Naive thymus-derived CD4-positive, alpha-beta T cell (primary cell): ENCODE measurements at regions of chr2 and their contacts with region 1.

Region 1: DNA sequence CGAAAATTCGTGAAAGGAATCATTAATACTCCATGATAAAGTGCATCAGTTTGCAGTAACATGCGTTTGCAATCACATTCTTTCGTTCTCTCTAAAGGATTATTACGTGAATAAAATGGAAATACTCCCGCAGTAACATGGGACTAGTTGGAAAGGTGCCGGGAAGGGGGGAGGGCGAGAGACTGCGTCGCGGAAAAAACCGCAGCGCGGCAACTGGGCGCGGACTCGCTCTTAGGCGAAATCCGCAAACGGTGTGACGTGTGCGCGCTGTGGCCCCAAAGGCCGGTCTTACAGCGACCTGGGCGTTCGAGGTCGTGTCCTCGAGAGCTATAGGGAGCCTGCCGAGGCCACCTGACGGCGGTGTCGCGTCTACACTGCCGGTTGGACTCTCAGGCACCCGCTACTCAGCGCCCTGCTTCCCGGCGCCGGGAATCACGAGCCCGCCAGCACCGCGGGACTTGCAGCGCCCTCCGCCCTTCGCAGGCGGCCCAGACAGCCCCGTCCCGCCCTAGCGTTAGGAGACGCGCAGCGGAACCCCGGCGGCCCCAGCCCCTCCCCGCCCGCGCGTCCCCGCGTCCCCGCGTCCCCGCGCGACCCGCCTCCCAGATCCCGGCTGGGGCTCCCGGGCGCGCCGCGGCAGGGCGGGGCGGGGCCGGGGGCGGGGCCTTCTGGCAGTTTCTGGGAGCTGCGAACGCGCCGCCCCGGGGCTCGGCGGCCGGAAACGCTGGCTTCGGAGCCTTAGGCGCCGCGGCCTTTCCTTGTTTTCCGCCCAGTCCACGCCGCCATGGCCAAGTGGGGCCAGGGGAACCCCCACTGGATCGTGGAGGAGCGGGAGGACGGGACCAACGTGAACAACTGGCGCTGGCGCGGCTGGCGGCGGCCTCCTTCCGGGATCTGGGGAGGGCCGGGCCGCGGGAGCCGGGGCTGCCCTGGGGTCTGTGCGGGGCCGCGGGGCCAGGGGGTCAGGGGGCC is 15.1 kb downstream of the C2orf74 start:
- DNase-seq: peak; percentile 89 to 97 (median 93)
- ATAC-seq: peak; percentile 95
- H3K4me3 ChIP-seq: peak overlapping the region; percentile 82
- H3K4me3 Mint-ChIP-seq: peak overlapping the region; percentile 90 to 100 (median 94)
- H3K27ac ChIP-seq: peak overlapping the region; percentile 97
- H3K27ac Mint-ChIP-seq: peak overlapping the region; percentile 89 to 97 (median 95)
- H3K4me1 ChIP-seq: peaks cover 27 to 41% of the 10 kb centered on the region in 2 donors
- H3K4me1 Mint-ChIP-seq: peaks cover 38 to 53% (median 48%) of the 10 kb centered on the region in 7 donors
- H3K27me3 ChIP-seq: no peaks in the 10 kb centered on the region
- H3K27me3 Mint-ChIP-seq: peaks cover 0 to 8% (median 0%) of the 10 kb centered on the region in 5 donors

Region 2: GRCh38 chr2:60992985-60993392 is 184.1 kb before region 1 on chr2:
- CTCF ChIA-PET with region 1: no interaction called
- POLR2A ChIA-PET with region 1: no interaction called
- intact Hi-C with region 1: no loop called
- DNase-seq: peak in 3 of 9 donors; percentile 2 to 19 (median 14)
- ATAC-seq: peak; percentile 97
- H3K4me3 ChIP-seq: peak overlapping the region; percentile 16
- H3K4me3 Mint-ChIP-seq: peak overlapping the region in 8 of 10 donors; percentile 11 to 59 (median 25)
- H3K27ac ChIP-seq: no peak overlapping the region
- H3K27ac Mint-ChIP-seq: peak overlapping the region in 6 of 9 donors; percentile 38 to 76 (median 66)
- H3K4me1 ChIP-seq: no peaks in the 10 kb centered on the region
- H3K4me1 Mint-ChIP-seq: peaks cover 5 to 9% (median 6%) of the 10 kb centered on the region in 7 donors
- H3K27me3 ChIP-seq: no peaks in the 10 kb centered on the region
- H3K27me3 Mint-ChIP-seq: no peaks in the 10 kb centered on the region

Region 3: GRCh38 chr2:61016808-61017555 is 160.1 kb before region 1 on chr2:
- CTCF ChIA-PET with region 1: no interaction called
- POLR2A ChIA-PET with region 1: interaction called, 4 read pairs
- intact Hi-C with region 1: loop called (anchors 1 kb)
- DNase-seq: peak; percentile 41 to 75 (median 72)
- ATAC-seq: peak; percentile 79
- H3K4me3 ChIP-seq: peak overlapping the region; percentile 100
- H3K4me3 Mint-ChIP-seq: peak overlapping the region; percentile 93 to 100 (median 97)
- H3K27ac ChIP-seq: peak overlapping the region; percentile 75
- H3K27ac Mint-ChIP-seq: peak overlapping the region; percentile 90 to 99 (median 95)
- H3K4me1 ChIP-seq: peaks cover 14 to 20% of the 10 kb centered on the region in 2 donors
- H3K4me1 Mint-ChIP-seq: peaks cover 23 to 68% (median 48%) of the 10 kb centered on the region in 7 donors
- H3K27me3 ChIP-seq: no peaks in the 10 kb centered on the region
- H3K27me3 Mint-ChIP-seq: no peaks in the 10 kb centered on the region

Region 4: DNA sequence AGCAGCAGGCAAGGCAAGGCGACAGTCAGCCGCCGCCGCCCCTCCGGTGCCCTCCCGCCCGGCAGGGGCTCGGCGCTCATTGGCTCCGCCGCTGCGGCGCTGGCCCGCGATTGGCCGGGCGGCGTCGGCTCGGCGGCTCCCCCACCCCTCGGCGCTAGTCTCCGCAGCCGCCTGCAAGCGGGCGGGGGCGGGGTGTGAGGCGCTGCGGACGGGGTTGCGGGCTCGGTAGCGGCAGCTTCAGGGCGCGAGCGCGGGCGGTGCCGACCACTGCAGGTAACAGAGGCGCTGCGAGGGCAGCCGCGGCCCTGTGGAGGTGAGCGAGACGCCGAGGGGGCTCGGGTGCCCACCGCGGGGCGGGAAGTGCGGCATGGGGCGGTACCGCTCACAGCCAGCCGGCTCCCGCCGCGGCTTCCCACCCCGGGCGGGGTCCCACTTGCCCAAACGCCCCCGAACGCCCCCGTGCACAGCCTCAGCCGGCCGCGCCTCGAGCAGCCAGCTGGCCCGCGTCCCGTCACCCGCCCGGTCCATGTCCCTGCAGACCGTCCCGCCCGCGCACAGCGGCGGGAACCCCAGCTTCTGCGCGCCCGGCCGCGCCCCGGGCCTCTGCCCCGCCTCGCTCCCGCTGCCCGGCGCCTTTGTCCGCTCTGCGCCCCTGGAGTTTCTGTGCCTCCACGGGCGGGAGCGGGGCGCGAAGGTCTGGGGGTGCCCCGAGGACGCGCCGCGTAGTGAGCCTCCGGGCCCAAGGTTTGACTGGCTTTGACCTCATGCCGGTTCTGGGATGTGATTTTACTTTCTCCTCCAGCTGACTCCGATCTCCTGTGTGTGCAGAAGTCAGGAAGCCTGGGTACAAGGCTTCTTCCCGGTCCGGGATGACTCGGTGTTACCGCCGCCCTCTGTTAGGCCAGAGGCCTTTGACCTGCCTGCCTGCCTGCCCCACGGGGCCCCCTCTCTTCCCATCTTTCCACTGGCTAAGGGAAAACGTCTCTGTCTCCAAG is 111.0 kb before region 1 on chr2 and contains the start of gene SANBR:
- CTCF ChIA-PET with region 1: no interaction called
- POLR2A ChIA-PET with region 1: interaction called, 9 read pairs
- intact Hi-C with region 1: loop called (anchors 1 to 2 kb)
- DNase-seq: peak; percentile 78 to 90 (median 83)
- ATAC-seq: peak; percentile 99
- H3K4me3 ChIP-seq: peak within 1 kb of the TSS; percentile 59
- H3K4me3 Mint-ChIP-seq: peak within 1 kb of the TSS; percentile 79 to 98 (median 95)
- H3K27ac ChIP-seq: peak within 1 kb of the TSS; percentile 49
- H3K27ac Mint-ChIP-seq: peak within 1 kb of the TSS; percentile 12 to 94 (median 79)
- H3K4me1 ChIP-seq: peaks cover 0 to 6% of the 10 kb centered on the region in 2 donors
- H3K4me1 Mint-ChIP-seq: peaks cover 0 to 17% (median 5%) of the 10 kb centered on the region in 7 donors
- H3K27me3 ChIP-seq: no peaks in the 10 kb centered on the region
- H3K27me3 Mint-ChIP-seq: peaks cover 0 to 2% (median 0%) of the 10 kb centered on the region in 5 donors
- total RNA-seq, gene SANBR: 2.0 to 5.9 (median 3.6) TPM

Region 5: DNA sequence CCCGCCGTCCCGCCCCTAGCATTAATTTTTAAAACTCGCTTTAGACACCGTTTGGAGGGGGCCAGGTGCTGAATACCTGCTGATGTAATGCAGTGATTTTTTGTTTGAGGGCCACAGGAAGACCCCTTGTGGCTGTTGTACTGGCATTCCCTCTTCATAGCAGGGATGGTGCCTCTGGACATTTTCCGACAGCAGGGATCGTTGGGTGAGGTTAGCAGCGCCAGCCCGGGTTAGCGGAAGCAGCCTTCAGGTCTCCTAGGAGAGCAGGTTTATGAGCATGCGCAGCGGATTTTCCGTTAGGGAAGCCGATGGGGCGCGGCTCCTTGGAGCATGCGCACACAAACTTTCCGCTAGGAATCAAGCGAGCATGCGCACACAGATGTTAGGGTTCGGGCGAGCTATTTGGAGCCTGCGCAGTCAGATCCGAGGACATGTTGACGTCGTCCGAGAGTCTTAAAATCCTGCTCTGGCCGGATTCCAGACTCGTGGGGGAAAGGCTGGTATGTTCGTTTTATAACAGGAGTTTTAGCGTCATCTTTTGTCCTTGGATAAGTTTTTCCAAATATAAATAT is 32.3 kb before region 1 on chr2:
- CTCF ChIA-PET with region 1: interaction called, 3 read pairs
- POLR2A ChIA-PET with region 1: interaction called, 55 read pairs
- intact Hi-C with region 1: loop called (anchors 1 kb)
- DNase-seq: peak; percentile 74 to 90 (median 86)
- ATAC-seq: peak; percentile 92
- H3K4me3 ChIP-seq: peak overlapping the region; percentile 82
- H3K4me3 Mint-ChIP-seq: peak overlapping the region; percentile 88 to 98 (median 94)
- H3K27ac ChIP-seq: peak overlapping the region; percentile 73
- H3K27ac Mint-ChIP-seq: peak overlapping the region; percentile 90 to 98 (median 95)
- H3K4me1 ChIP-seq: peaks cover 4 to 5% of the 10 kb centered on the region in 2 donors
- H3K4me1 Mint-ChIP-seq: peaks cover 0 to 18% (median 7%) of the 10 kb centered on the region in 7 donors
- H3K27me3 ChIP-seq: no peaks in the 10 kb centered on the region
- H3K27me3 Mint-ChIP-seq: peaks cover 0 to 2% (median 0%) of the 10 kb centered on the region in 5 donors

Region 6: DNA sequence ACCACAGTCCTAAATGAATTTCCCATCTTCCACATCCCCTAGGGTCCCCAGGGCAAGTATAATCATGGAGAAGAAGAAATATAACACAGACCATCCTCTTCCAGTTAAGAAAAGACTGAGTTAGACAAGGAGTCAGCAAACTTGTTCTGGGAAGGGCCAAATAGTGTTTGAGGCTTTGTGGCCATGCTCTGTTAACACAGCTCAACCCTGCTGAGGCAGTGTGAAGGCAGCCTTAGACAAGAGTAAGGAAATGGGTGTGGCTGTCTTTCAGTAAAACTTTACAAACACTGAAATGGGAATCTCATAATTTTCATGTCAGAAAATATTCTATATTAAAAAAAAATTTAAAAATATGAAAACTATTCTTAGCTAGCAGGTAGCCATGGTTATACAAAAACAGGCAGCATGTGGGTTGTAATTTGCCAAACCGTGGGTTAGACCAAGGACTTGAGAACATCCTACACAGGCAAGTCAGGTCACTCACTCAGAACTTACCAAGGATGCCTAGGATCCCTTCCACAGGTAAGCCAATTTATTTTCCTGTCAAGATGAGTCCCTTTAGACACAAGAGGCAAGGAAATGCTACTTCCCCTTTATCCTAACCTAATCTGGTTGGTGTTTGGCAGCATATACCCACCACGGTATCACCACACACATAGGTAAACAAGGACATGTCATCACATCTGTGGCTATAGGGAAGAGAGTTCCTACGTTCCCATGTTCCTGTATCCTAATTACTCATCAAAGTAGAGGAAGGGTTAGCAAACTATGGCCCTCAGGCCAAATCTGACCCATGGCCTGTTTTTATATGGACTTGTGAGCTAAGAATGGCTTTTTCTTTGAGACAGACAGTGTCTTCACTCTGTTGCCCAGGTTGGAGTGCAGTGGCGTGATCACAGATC is 16.9 kb after region 1 on chr2:
- CTCF ChIA-PET with region 1: no interaction called
- POLR2A ChIA-PET with region 1: interaction called, 12 read pairs
- intact Hi-C with region 1: no loop called
- DNase-seq: no peak
- ATAC-seq: peak; percentile 77
- H3K4me3 ChIP-seq: no peak overlapping the region
- H3K4me3 Mint-ChIP-seq: peak overlapping the region in 1 of 10 donors; percentile 3
- H3K27ac ChIP-seq: no peak overlapping the region
- H3K27ac Mint-ChIP-seq: peak overlapping the region; percentile 38 to 85 (median 72)
- H3K4me1 ChIP-seq: peaks cover 0 to 6% of the 10 kb centered on the region in 2 donors
- H3K4me1 Mint-ChIP-seq: peaks cover 4 to 27% (median 15%) of the 10 kb centered on the region in 7 donors
- H3K27me3 ChIP-seq: no peaks in the 10 kb centered on the region
- H3K27me3 Mint-ChIP-seq: no peaks in the 10 kb centered on the region

Region 7: DNA sequence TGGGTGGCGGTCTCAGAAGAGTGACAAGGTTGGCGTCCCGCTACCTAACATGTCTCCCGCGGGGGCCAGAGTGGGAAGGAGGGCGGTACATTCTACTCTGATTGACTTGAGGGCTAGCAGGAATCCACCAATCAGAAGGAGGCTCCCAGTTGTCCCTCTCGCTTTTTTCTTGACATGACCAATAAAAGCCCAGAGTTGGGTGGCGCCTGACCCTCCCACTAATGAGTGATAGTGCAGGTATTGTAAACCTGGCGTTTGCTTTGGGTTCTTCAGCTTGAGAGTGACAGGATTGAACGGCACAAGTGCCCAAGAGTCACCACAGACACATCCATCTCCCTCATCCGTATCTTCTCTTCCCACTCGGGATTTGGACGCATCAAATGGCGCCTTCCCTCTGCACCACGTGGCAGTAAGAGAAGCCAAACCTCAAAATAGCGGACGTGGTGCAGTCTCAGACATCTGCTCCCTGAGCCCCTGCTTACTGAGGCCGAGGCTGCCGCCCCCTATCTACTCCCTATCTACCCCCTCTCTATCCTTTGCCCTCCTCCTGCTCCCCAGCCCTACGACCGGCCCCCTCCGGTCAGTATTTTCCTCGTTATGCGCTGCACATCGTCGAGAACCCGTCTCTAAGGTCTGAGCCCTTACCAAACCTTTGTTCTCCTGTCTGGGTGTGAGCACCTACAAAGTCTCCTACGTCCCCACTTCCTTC is 677.6 kb after region 1 on chr2:
- CTCF ChIA-PET with region 1: no interaction called
- POLR2A ChIA-PET with region 1: no interaction called
- intact Hi-C with region 1: loop called (anchors 2 to 10 kb)
- DNase-seq: peak; percentile 61 to 96 (median 94)
- ATAC-seq: peak; percentile 95
- H3K4me3 ChIP-seq: peak overlapping the region; percentile 100
- H3K4me3 Mint-ChIP-seq: peak overlapping the region; percentile 92 to 99 (median 96)
- H3K27ac ChIP-seq: peak overlapping the region; percentile 77
- H3K27ac Mint-ChIP-seq: peak overlapping the region; percentile 90 to 98 (median 95)
- H3K4me1 ChIP-seq: peaks cover 4 to 6% of the 10 kb centered on the region in 2 donors
- H3K4me1 Mint-ChIP-seq: peaks cover 10 to 27% (median 17%) of the 10 kb centered on the region in 7 donors
- H3K27me3 ChIP-seq: no peaks in the 10 kb centered on the region
- H3K27me3 Mint-ChIP-seq: no peaks in the 10 kb centered on the region